Psoas muscle (tissue), 8 donors: ENCODE measurements at regions of chr20 and their contacts with region 1.

Region 1: GRCh38 chr20:41028348-41029148 is at the start of gene TOP1:
- DNase-seq: peak; percentile 100
- ATAC-seq: peak; percentile 97 to 98 (median 97)
- H3K4me3 ChIP-seq: peak within 1 kb of the TSS; percentile 97
- H3K27ac ChIP-seq: peak within 1 kb of the TSS; percentile 96
- H3K4me1 ChIP-seq: peaks cover 36% of the 10 kb centered on the region
- H3K27me3 ChIP-seq: no peaks in the 10 kb centered on the region
- CTCF ChIP-seq: no peak
- total RNA-seq, gene TOP1: 19.9 to 30.7 (median 22.9) TPM

Region 2: DNA sequence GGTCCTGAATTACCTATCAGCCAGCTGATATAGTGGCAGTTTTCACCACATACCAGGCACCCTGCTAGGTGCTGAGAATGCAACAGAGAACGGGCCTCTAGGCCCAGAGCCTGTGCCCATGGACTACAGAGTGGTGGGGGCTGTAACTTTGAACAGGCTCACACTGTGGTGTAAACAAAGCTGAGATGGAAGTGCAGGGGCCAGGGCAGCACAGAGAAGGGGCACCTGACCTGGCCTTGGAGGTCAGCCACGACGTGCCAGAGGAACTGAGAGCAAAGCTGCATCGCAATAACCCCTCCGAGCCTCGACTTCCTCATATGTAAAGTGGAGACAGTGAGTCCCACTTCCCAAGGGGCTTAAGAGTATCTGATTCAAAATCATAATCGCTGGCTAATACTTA is 445.3 kb before region 1 on chr20:
- intact Hi-C with region 1: no loop called
- DNase-seq: no peak
- ATAC-seq: no peak
- H3K4me3 ChIP-seq: no peak overlapping the region
- H3K27ac ChIP-seq: no peak overlapping the region
- H3K4me1 ChIP-seq: peaks cover 3% of the 10 kb centered on the region
- H3K27me3 ChIP-seq: no peaks in the 10 kb centered on the region
- CTCF ChIP-seq: no peak

Region 3: DNA sequence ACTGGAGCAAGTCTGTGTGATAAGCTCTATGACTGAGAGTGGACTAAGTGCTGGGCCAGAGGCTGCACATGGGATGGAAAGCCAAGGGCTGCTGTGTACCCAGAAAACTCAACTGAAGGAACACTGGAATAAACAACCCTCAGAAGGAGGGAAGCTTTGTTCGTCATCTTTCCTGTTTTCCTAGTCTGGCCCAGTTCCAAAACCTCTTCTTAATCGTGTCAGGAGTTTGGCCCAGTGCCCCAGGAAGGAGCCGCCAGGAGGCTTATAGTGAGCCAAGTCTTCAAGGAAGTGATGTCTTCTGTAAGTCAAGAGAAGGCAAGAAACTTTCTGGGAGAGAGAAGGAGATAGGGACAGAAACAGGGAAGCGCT is 23.2 kb before region 1 on chr20:
- intact Hi-C with region 1: loop called in 1 of 2 experiments (anchors 2 kb)
- DNase-seq: peak; percentile 82 to 92
- ATAC-seq: peak in 2 of 4 donors; percentile 14 to 42
- H3K4me3 ChIP-seq: no peak overlapping the region
- H3K27ac ChIP-seq: peak overlapping the region; percentile 62
- H3K4me1 ChIP-seq: peaks cover 29% of the 10 kb centered on the region
- H3K27me3 ChIP-seq: no peaks in the 10 kb centered on the region
- CTCF ChIP-seq: no peak

Region 4: DNA sequence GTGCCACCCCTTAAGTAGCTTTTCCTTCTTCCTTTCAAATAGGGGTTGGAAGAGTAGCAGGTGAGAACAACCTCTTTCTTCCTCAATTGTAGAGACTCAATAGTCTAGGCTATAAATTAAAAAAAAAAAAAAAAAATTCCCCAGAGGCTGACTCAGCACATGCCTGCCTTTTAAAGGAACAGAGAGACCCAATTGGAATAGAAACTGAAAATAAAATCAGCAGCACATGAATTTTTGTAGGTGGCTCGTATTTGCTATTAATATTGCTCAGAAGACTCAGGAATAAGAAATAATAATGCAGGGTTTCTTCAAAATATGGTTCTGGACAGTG is 19.4 kb after region 1 on chr20:
- intact Hi-C with region 1: loop called in 1 of 2 experiments (anchors 2 kb)
- DNase-seq: no peak
- ATAC-seq: peak; percentile 14 to 47 (median 28)
- H3K4me3 ChIP-seq: peak overlapping the region; percentile 40
- H3K27ac ChIP-seq: peak overlapping the region; percentile 14
- H3K4me1 ChIP-seq: peaks cover 78% of the 10 kb centered on the region
- H3K27me3 ChIP-seq: no peaks in the 10 kb centered on the region
- CTCF ChIP-seq: no peak

Region 5: DNA sequence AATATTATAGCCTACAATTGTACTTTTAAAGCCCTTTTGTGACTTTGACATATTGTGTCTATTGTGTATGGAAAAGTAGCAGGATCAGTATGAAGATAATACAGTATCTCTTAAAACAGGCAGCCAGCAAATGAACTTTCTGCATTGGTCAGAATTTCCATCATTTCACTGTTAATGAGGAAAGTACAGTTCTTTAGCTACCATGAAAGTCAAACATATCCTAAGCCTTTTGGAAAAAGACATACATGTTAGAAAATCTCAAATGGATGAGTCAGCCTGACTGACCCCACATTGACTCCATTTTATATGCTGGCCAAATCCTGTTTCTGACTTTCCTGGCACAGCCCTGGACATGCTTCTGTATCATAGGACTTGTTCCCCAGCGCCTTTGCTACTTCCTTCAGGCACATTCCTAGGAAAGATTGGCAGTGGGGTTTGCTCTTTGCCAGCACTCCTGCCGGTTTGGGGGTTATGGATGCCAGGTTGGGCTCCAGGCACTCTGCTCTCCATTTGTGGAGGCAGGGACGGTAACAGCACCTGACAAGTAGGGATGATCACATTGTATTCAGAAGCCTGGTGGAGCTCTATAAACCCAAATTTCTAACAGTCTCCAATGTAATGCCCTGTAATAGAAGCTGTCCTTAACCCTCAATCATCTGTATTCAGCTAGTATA is 43.8 kb after region 1 on chr20:
- intact Hi-C with region 1: loop called in 1 of 2 experiments (anchors 5 kb)
- DNase-seq: peak in 1 of 2 donors; percentile 20
- ATAC-seq: peak; percentile 43 to 72 (median 65)
- H3K4me3 ChIP-seq: no peak overlapping the region
- H3K27ac ChIP-seq: peak overlapping the region; percentile 31
- H3K4me1 ChIP-seq: peaks cover 38% of the 10 kb centered on the region
- H3K27me3 ChIP-seq: no peaks in the 10 kb centered on the region
- CTCF ChIP-seq: no peak